Activated CD4-positive, alpha-beta T cell treated with anti-CD3 and anti-CD28 coated beads, Interleukin-2, amount 10 ng/mL, durations not matched to agents 24 days and 14 days (primary cell): ENCODE measurements at regions of chr1 and their contacts with region 1.

Region 1: GRCh38 chr1:37692078-37692833 is at the start of gene CDCA8:
- DNase-seq: peak; percentile 99
- H3K4me3 Mint-ChIP-seq: peak within 1 kb of the TSS; percentile 99
- H3K27ac Mint-ChIP-seq: peak within 1 kb of the TSS; percentile 96
- H3K4me1 Mint-ChIP-seq: peaks cover 43% of the 10 kb centered on the region
- H3K27me3 Mint-ChIP-seq: peaks cover 2% of the 10 kb centered on the region
- total RNA-seq, gene CDCA8: 35.6 and 35.9 TPM in 2 replicates

Region 2: DNA sequence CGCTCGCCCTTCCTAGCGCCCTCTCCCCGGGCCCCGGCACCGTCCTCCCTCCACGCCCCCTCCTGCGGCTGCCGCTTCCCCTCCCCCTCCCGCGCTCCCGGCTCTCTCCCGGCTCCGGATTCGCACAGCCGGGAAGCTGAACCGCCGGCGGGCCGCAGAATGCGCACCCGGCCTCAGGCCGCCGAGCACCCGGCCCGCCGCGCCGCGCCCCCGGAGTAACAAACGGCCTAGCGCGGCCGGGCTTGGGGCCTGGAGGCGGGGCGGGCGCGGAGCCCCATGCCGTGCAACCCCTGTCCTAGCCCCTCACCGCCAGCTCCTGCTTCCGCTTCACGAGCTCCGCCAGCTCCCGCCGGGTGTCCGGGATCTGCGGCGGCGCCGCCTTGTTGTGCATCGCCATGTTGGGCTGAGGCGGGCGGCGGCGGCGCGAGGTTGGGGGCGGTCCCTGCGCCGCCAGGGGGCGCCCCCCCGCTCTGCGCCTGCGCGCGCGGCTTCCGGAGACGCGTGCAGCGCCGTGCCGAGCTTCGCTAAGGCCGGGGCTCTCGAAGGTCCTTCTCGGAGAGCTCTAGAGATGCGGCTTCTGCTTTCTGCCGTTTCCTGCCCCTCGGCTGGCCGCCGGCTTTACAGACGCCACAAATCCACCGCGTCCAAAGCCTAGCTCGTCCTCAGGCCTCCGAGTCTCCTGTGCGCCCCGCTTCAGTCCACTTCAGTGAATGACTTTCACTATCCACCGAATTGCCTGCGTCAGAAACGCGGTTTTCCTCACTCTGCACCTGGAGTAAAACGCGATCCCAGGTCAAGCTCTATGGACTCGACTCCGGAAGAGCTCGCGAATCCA is 177.7 kb before region 1 on chr1 and contains the start of gene MEAF6:
- intact Hi-C with region 1: loop called (anchors 1 kb)
- DNase-seq: peak; percentile 96
- H3K4me3 Mint-ChIP-seq: peak within 1 kb of the TSS; percentile 98
- H3K27ac Mint-ChIP-seq: peak within 1 kb of the TSS; percentile 97
- H3K4me1 Mint-ChIP-seq: peaks cover 39% of the 10 kb centered on the region
- H3K27me3 Mint-ChIP-seq: no peaks in the 10 kb centered on the region
- total RNA-seq, gene MEAF6: 94.4 and 95.6 TPM in 2 replicates

Region 3: GRCh38 chr1:37595440-37596319 is 96.6 kb before region 1 on chr1 and contains the start of gene GNL2:
- intact Hi-C with region 1: loop called (anchors 1 kb)
- DNase-seq: peak; percentile 99
- H3K4me3 Mint-ChIP-seq: peak within 1 kb of the TSS; percentile 99
- H3K27ac Mint-ChIP-seq: peak within 1 kb of the TSS; percentile 96
- H3K4me1 Mint-ChIP-seq: peaks cover 26% of the 10 kb centered on the region
- H3K27me3 Mint-ChIP-seq: peaks cover 6% of the 10 kb centered on the region
- total RNA-seq, gene GNL2: 109 and 110 TPM in 2 replicates

Region 4: DNA sequence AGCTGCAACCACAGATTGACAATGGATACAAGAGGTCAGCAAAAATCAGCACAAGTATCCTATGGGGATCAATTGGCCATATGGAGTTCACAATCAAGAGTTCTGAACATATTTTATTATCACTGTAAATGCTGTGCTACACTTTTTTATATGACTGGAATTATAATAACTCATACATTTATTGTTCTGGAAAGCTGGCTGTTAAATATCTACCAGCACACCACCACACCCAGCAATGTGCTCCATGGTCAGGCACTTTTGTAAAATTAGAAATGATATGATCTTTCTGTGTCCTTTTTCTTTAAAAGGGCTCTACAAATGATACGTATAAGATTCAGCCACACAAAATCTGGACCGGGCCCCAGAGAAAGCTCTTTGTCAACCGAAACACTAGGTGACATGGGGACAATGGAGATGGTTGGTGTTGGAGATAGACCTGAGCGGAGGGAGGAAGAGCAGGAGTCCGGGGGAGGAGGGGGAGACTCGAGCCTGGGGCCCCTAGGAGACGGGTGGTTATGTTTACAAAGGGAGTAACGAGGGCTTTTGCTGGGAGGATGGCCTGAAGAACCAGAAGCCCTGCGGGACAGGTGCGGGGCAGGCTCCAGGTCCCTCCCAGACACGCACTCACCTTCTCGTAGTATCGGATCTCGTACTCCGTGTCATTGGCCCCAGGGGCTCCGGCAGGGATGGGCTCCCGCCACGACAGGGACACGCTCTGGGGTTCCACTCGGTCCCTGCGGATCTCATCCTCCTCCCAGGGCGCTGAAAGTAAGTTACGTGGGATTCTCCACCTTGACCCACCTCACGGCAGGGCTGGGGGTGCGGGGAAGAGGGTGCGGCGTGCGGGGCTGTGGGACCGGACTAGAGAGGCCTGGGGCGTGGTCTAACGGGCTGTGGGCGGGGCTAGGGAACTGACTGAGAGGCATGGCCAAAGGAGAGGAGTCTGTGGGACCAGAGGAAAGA is 42.7 kb after region 1 on chr1:
- intact Hi-C with region 1: no loop called
- DNase-seq: peak; percentile 64
- H3K4me3 Mint-ChIP-seq: no peak overlapping the region
- H3K27ac Mint-ChIP-seq: no peak overlapping the region
- H3K4me1 Mint-ChIP-seq: no peaks in the 10 kb centered on the region
- H3K27me3 Mint-ChIP-seq: peaks cover 38% of the 10 kb centered on the region

Region 5: DNA sequence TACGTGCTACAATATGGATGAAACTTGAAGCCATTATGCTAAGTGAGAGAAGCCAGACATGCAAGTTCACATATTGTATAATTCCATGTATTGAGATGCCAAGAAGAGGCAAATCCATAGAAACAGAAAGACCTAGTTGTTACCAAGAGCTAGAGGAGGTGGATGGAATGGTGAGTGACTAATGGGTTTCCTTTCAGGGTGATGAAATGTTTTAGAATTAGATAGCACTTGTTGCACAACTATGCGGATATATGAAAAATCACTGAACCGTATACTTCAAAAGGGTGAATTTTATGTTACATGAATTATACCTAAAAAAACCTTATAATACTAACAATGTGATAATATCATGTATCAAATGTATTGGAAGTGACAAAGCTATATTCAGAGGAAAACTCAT is 54.5 kb after region 1 on chr1:
- intact Hi-C with region 1: no loop called
- DNase-seq: no peak
- H3K4me3 Mint-ChIP-seq: no peak overlapping the region
- H3K27ac Mint-ChIP-seq: no peak overlapping the region
- H3K4me1 Mint-ChIP-seq: no peaks in the 10 kb centered on the region
- H3K27me3 Mint-ChIP-seq: peaks cover 25% of the 10 kb centered on the region

Region 6: GRCh38 chr1:37807555-37808368 is 115.5 kb after region 1 on chr1 and contains the starts of genes C1orf122 and YRDC:
- intact Hi-C with region 1: loop called (anchors 1 kb)
- DNase-seq: peak; percentile 98
- H3K4me3 Mint-ChIP-seq: peak within 1 kb of the TSS; percentile 98
- H3K27ac Mint-ChIP-seq: peak within 1 kb of the TSS; percentile 98
- H3K4me1 Mint-ChIP-seq: peaks cover 31% of the 10 kb centered on the region
- H3K27me3 Mint-ChIP-seq: no peaks in the 10 kb centered on the region
- total RNA-seq, gene C1orf122: 26.4 and 26.7 TPM in 2 replicates
- total RNA-seq, gene YRDC: 69.9 and 76.1 TPM in 2 replicates

Region 7: GRCh38 chr1:37995751-37996345 is 303.6 kb after region 1 on chr1:
- intact Hi-C with region 1: loop called (anchors 10 kb)
- DNase-seq: peak; percentile 78
- H3K4me3 Mint-ChIP-seq: peak overlapping the region; percentile 84
- H3K27ac Mint-ChIP-seq: peak overlapping the region; percentile 80
- H3K4me1 Mint-ChIP-seq: peaks cover 44% of the 10 kb centered on the region
- H3K27me3 Mint-ChIP-seq: no peaks in the 10 kb centered on the region

Region 8: GRCh38 chr1:38859561-38860453 is 1167.6 kb after region 1 on chr1 and contains the start of gene RRAGC:
- intact Hi-C with region 1: loop called (anchors 10 kb)
- DNase-seq: peak; percentile 100
- H3K4me3 Mint-ChIP-seq: peak within 1 kb of the TSS; percentile 88
- H3K27ac Mint-ChIP-seq: peak within 1 kb of the TSS; percentile 77
- H3K4me1 Mint-ChIP-seq: peaks cover 24% of the 10 kb centered on the region
- H3K27me3 Mint-ChIP-seq: no peaks in the 10 kb centered on the region
- total RNA-seq, gene RRAGC: 10.9 and 11.0 TPM in 2 replicates